A549 (cell line): ENCODE measurements at regions of chr22 and their contacts with region 1.

Region 1: DNA sequence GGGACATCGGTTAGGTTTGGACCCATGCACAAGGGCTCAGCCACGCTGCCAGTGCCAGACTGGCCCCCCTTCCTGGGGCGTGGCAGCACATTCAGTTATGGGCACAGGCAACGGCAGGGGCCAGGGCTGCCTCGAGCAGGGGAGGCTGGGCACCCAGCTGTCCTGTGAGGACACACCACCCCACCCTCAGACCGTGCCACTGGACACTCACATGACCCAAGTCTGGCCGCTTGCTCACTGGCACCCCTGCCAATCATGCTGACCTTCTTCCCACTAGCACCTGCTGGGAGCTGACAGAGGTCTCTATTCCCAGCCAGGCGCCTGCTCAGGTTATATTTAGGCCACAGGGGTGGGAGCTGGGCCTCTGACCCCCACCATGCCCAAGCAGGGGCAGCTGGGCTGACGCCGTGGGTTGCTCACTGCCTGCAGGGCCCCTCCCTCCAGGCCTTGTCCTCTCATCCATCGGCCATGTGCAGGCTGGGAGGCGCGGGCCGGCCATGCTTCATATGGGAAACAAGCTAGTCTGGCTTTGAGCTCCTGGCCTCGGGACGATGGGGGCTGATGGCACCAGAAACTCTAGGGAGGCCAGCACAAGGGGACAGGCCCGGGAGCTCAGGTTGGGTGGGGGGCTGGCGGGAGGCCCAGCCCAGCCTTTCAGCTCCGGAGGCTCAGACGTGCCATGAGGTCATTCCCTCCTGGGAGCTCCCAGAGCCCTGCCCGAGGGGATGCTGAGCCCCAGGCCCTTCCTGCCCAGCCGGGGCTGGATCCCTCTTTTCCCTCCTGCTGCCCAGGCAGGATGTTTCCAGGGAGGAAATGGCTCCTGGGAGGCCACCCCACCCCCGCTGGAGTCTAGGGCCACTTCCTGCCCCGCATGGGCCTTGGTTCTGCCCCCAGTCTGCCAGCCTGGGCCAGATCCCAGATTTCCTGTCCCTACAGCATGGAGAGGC is 15.2 kb upstream of the TBX1 start:
- DNase-seq: no peak
- ATAC-seq: no peak
- H3K4me3 ChIP-seq: no peak overlapping the region
- H3K27ac ChIP-seq: peak overlapping the region in 1 of 2 experiments; percentile 38; a peak in 1 of 6 replicates
- H3K4me1 ChIP-seq: peaks cover 6% of the 10 kb centered on the region; the same call in 2 of the 3 replicates
- CTCF ChIP-seq: no peak
- EP300 ChIP-seq: no peak
- POLR2A ChIP-seq: no peak
- RAD21 ChIP-seq: no peak

Region 2: GRCh38 chr22:19756288-19757128 is 11.1 kb after region 1 on chr22:
- CTCF ChIA-PET with region 1: interaction called, 32 read pairs
- POLR2A ChIA-PET with region 1: no interaction called
- DNase-seq: peak; percentile 54 to 72
- ATAC-seq: peak; percentile 72 to 81
- H3K4me3 ChIP-seq: peak overlapping the region; percentile 42
- H3K27ac ChIP-seq: peak overlapping the region; percentile 63 to 85; a peak in 5 of 6 replicates
- H3K4me1 ChIP-seq: peaks cover 6% of the 10 kb centered on the region
- CTCF ChIP-seq: peak; percentile 37
- EP300 ChIP-seq: no peak
- POLR2A ChIP-seq: no peak
- RAD21 ChIP-seq: peak; percentile 47 to 58